ENCODE measurements at regions of chr6 and their contacts with region 1.

Region 1: GRCh38 chr6:13795041-13795750 is 19.2 kb downstream of the MCUR1 start:
- DNase-seq: peak; percentile 54 to 80 (median 77)
- ATAC-seq: peak; percentile 98
- H3K4me3 ChIP-seq: no peak overlapping the region
- H3K4me3 Mint-ChIP-seq: no peak overlapping the region
- H3K27ac ChIP-seq: no peak overlapping the region
- H3K27ac Mint-ChIP-seq: peak overlapping the region in 5 of 9 donors; percentile 7 to 50 (median 27)
- H3K4me1 ChIP-seq: no peaks in the 10 kb centered on the region
- H3K4me1 Mint-ChIP-seq: peaks cover 5 to 16% (median 6%) of the 10 kb centered on the region in 7 donors
- H3K27me3 ChIP-seq: no peaks in the 10 kb centered on the region
- H3K27me3 Mint-ChIP-seq: no peaks in the 10 kb centered on the region

Region 2: DNA sequence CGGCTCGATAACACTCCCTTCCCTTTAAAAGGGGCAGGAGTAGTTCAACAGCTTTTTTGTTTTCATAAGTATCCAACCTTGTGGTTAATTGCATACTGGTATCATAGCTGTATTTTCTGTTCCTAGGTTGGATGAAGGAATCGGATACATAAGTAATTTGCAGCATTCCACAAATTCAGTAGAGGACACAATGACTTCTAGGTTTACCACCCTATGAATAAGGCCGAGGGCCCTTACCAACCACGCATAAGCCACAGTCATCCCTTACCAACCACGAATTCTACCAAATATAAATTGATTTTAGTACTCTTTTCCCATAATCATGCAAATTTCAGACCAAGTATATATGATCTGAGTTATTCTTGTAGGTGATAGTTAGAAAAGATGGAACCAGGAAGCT is 17.2 kb before region 1 on chr6:
- CTCF ChIA-PET with region 1: no interaction called
- POLR2A ChIA-PET with region 1: no interaction called
- intact Hi-C with region 1: no loop called
- DNase-seq: no peak
- ATAC-seq: no peak
- H3K4me3 ChIP-seq: no peak overlapping the region
- H3K4me3 Mint-ChIP-seq: no peak overlapping the region
- H3K27ac ChIP-seq: no peak overlapping the region
- H3K27ac Mint-ChIP-seq: no peak overlapping the region
- H3K4me1 ChIP-seq: no peaks in the 10 kb centered on the region
- H3K4me1 Mint-ChIP-seq: no peaks in the 10 kb centered on the region
- H3K27me3 ChIP-seq: no peaks in the 10 kb centered on the region
- H3K27me3 Mint-ChIP-seq: no peaks in the 10 kb centered on the region

Region 3: GRCh38 chr6:13814176-13814937 is 19.2 kb after region 1 on chr6 and contains the start of gene MCUR1:
- CTCF ChIA-PET with region 1: no interaction called
- POLR2A ChIA-PET with region 1: interaction called, 3 read pairs
- intact Hi-C with region 1: loop called (anchors 1 kb)
- DNase-seq: peak; percentile 69 to 87 (median 76)
- ATAC-seq: peak; percentile 91
- H3K4me3 ChIP-seq: peak within 1 kb of the TSS; percentile 71
- H3K4me3 Mint-ChIP-seq: peak within 1 kb of the TSS; percentile 87 to 92 (median 90)
- H3K27ac ChIP-seq: peak within 1 kb of the TSS; percentile 82
- H3K27ac Mint-ChIP-seq: peak within 1 kb of the TSS; percentile 60 to 93 (median 85)
- H3K4me1 ChIP-seq: peaks cover 0 to 13% of the 10 kb centered on the region in 2 donors
- H3K4me1 Mint-ChIP-seq: peaks cover 17 to 40% (median 38%) of the 10 kb centered on the region in 7 donors
- H3K27me3 ChIP-seq: no peaks in the 10 kb centered on the region
- H3K27me3 Mint-ChIP-seq: peaks cover 0 to 25% (median 0%) of the 10 kb centered on the region in 5 donors
- total RNA-seq, gene MCUR1: 5.7 to 20.6 (median 10.0) TPM

Region 4: GRCh38 chr6:13908955-13909381 is 113.8 kb after region 1 on chr6:
- CTCF ChIA-PET with region 1: no interaction called
- POLR2A ChIA-PET with region 1: no interaction called
- intact Hi-C with region 1: loop called in 1 of 2 experiments (anchors 1 kb)
- DNase-seq: peak in 7 of 9 donors; percentile 22 to 56 (median 36)
- ATAC-seq: peak; percentile 92
- H3K4me3 ChIP-seq: no peak overlapping the region
- H3K4me3 Mint-ChIP-seq: no peak overlapping the region
- H3K27ac ChIP-seq: no peak overlapping the region
- H3K27ac Mint-ChIP-seq: no peak overlapping the region
- H3K4me1 ChIP-seq: peaks cover 0 to 5% of the 10 kb centered on the region in 2 donors
- H3K4me1 Mint-ChIP-seq: peaks cover 0 to 8% (median 3%) of the 10 kb centered on the region in 7 donors
- H3K27me3 ChIP-seq: no peaks in the 10 kb centered on the region
- H3K27me3 Mint-ChIP-seq: peaks cover 24 to 51% (median 39%) of the 10 kb centered on the region in 5 donors

Region 5: GRCh38 chr6:14144678-14145113 is 349.5 kb after region 1 on chr6:
- CTCF ChIA-PET with region 1: interaction called, 3 read pairs
- POLR2A ChIA-PET with region 1: no interaction called
- intact Hi-C with region 1: loop called (anchors 1 to 5 kb)
- DNase-seq: peak; percentile 45 to 76 (median 62)
- ATAC-seq: peak; percentile 91
- H3K4me3 ChIP-seq: no peak overlapping the region
- H3K4me3 Mint-ChIP-seq: no peak overlapping the region
- H3K27ac ChIP-seq: no peak overlapping the region
- H3K27ac Mint-ChIP-seq: no peak overlapping the region
- H3K4me1 ChIP-seq: no peaks in the 10 kb centered on the region
- H3K4me1 Mint-ChIP-seq: peaks cover 0 to 12% (median 2%) of the 10 kb centered on the region in 7 donors
- H3K27me3 ChIP-seq: no peaks in the 10 kb centered on the region
- H3K27me3 Mint-ChIP-seq: no peaks in the 10 kb centered on the region